ENCODE measurements at regions of chrX and their contacts with region 1.

Region 1: GRCh38 chrX:41275661-41276609 is 58.0 kb upstream of the DDX3X start:
- DNase-seq: peak; percentile 67 to 85
- ATAC-seq: peak; percentile 77 to 96 (median 88)
- H3K4me3 ChIP-seq: peak overlapping the region; percentile 66
- H3K27ac ChIP-seq: no peak overlapping the region
- H3K4me1 ChIP-seq: no peaks in the 10 kb centered on the region
- H3K27me3 ChIP-seq: peaks cover 0 to 18% (median 0%) of the 10 kb centered on the region in 3 donors
- CTCF ChIP-seq: peak; percentile 57

Region 2: GRCh38 chrX:41441934-41442823 is 166.2 kb after region 1 on chrX:
- intact Hi-C with region 1: loop called in 1 of 2 experiments (anchors 10 kb)
- DNase-seq: peak; percentile 89 to 95
- ATAC-seq: peak; percentile 89 to 95 (median 92)
- H3K4me3 ChIP-seq: peak overlapping the region; percentile 54
- H3K27ac ChIP-seq: peak overlapping the region; percentile 80
- H3K4me1 ChIP-seq: no peaks in the 10 kb centered on the region
- H3K27me3 ChIP-seq: peaks cover 0 to 4% (median 0%) of the 10 kb centered on the region in 3 donors
- CTCF ChIP-seq: peak; percentile 46

Region 3: DNA sequence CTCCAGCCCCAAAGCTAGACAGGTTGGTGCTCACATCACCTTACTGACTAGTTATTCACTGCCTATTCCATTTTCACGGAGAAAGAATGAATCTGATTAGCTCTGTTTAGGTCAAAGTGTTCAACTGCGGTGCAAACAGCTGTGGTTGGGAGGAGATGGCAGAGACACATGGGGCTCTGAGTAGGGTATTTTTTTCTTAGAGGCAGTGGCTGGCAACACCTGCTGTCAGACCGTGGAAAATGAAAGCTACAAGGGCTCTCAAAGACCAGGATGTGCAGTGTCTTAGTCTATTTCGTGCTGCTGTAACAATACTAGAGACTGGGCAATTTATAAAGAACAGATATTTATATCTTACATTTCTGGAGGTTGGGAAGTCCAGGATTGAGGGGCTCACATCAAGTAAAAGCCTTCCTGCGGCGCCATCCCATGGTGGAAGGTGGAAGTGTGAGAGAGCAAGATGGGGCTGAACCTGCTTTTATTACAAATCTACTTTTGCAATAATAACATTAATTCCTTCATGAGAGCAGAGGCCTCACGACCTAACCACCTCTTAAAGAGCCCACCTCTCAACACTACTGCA is 181.8 kb after region 1 on chrX:
- intact Hi-C with region 1: loop called in 1 of 2 experiments (anchors 5 kb)
- DNase-seq: no peak
- ATAC-seq: no peak
- H3K4me3 ChIP-seq: no peak overlapping the region
- H3K27ac ChIP-seq: no peak overlapping the region
- H3K4me1 ChIP-seq: no peaks in the 10 kb centered on the region
- H3K27me3 ChIP-seq: peaks cover 0 to 5% (median 0%) of the 10 kb centered on the region in 3 donors
- CTCF ChIP-seq: no peak